Endothelial cell of umbilical vein (primary cell): ENCODE measurements at regions of chr4 and their contacts with region 1.

Region 1: DNA sequence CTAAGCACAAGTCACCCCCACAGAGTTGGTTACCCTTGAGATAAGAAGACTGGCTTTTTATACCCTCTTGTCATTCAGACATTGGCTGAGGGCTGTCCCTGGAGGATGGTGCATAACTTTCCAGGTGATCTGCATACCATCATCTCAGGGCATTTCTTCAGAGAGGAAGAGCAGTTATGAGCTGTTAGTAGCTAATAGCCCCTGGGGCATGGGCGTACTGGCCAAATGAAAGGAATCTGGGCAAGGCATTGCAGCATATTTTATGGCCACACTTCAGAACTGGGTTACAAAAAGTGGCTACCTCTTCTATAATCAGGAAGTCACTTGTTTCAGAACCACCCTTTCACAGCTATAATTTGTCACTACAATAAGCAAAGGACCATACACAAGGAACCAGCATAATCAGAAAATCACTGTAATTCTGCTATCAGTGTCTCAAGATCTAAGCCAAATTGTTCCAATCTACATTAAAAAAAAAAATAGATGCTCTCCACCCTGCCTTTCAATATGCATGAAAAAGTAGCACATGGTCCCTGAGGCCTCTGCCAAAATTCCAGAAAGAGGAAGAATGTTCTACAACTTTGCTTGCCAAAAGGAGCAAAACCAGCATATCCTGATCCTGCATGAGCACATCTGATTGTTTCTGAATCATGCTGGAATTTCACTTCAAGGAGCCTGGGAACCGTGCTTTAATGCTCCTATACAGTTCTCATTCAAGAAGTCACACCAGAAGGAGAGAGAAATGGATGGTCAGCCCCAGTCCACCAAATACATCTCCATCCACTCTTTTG is 92.0 kb downstream of the TMEM144 start:
- DNase-seq: peak; percentile 76
- H3K4me3 ChIP-seq: no peak overlapping the region
- H3K27ac ChIP-seq: no peak overlapping the region
- H3K4me1 ChIP-seq: peaks cover 2% of the 10 kb centered on the region
- H3K27me3 ChIP-seq: no peaks in the 10 kb centered on the region
- CTCF ChIP-seq: no peak
- POLR2A ChIP-seq: no peak

Region 2: GRCh38 chr4:157634057-157634456 is 668.2 kb before region 1 on chr4:
- CTCF ChIA-PET with region 1: no interaction called
- POLR2A ChIA-PET with region 1: no interaction called
- dilution Hi-C with region 1: no loop called
- intact Hi-C with region 1: no loop called
- DNase-seq: no peak
- H3K4me3 ChIP-seq: no peak overlapping the region
- H3K27ac ChIP-seq: no peak overlapping the region
- H3K4me1 ChIP-seq: no peaks in the 10 kb centered on the region
- H3K27me3 ChIP-seq: no peaks in the 10 kb centered on the region
- CTCF ChIP-seq: no peak
- POLR2A ChIP-seq: no peak

Region 3: GRCh38 chr4:158428242-158428641 is 126.0 kb after region 1 on chr4:
- CTCF ChIA-PET with region 1: no interaction called
- POLR2A ChIA-PET with region 1: no interaction called
- dilution Hi-C with region 1: no loop called
- intact Hi-C with region 1: loop called (anchors 5 kb)
- DNase-seq: peak; percentile 22
- H3K4me3 ChIP-seq: no peak overlapping the region
- H3K27ac ChIP-seq: peak overlapping the region; percentile 41
- H3K4me1 ChIP-seq: peaks cover 4% of the 10 kb centered on the region
- H3K27me3 ChIP-seq: no peaks in the 10 kb centered on the region
- CTCF ChIP-seq: no peak
- POLR2A ChIP-seq: no peak